PC-3 (cell line): ENCODE measurements at regions of chr12 and their contacts with region 1.

Region 1: GRCh38 chr12:53938326-53939140 is at the start of gene HOXC13:
- DNase-seq: peak; percentile 99
- ATAC-seq: peak; percentile 82
- H3K4me3 ChIP-seq: peak within 1 kb of the TSS; percentile 87
- H3K27ac ChIP-seq: no peak within 1 kb of the TSS
- H3K4me1 ChIP-seq: peaks cover 25% of the 10 kb centered on the region
- H3K27me3 ChIP-seq: no peaks in the 10 kb centered on the region
- CTCF ChIP-seq: no peak
- total RNA-seq, gene HOXC13: 7.8 and 9.0 TPM in 2 replicates

Region 2: DNA sequence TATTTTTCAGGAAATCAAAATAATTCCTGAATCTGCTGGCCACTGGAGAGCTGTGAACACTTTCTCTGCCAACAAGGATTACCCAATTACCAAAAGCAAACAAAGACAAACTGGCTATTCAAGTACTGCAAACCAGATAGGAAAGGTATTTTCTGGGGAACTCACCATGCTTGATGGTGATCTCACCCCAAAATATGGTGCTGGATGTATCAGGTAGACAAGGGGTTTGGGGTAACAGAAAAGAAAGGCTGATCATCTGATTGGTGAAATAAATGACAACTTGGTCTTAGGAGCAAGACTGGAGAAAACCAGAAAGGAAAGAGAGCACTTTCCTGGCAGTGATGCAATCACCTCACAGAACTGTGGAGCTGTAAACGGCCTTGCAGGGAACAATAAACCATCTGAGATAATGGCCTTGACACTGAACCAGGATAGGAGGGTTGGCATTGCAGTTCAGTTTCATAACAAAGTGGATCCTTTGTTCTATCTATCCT is 400.3 kb before region 1 on chr12:
- CTCF ChIA-PET with region 1: no interaction called
- POLR2A ChIA-PET with region 1: no interaction called
- intact Hi-C with region 1: no loop called
- DNase-seq: peak; percentile 72
- ATAC-seq: peak; percentile 51
- H3K4me3 ChIP-seq: no peak overlapping the region
- H3K27ac ChIP-seq: peak overlapping the region; percentile 47
- H3K4me1 ChIP-seq: peaks cover 19% of the 10 kb centered on the region
- H3K27me3 ChIP-seq: no peaks in the 10 kb centered on the region
- CTCF ChIP-seq: no peak

Region 3: GRCh38 chr12:53727310-53728041 is 211.1 kb before region 1 on chr12 and contains the start of gene CALCOCO1:
- CTCF ChIA-PET with region 1: no interaction called
- POLR2A ChIA-PET with region 1: no interaction called
- intact Hi-C with region 1: loop called (anchors 1 kb)
- DNase-seq: peak; percentile 98
- ATAC-seq: peak; percentile 100
- H3K4me3 ChIP-seq: peak within 1 kb of the TSS; percentile 77
- H3K27ac ChIP-seq: no peak within 1 kb of the TSS
- H3K4me1 ChIP-seq: peaks cover 16% of the 10 kb centered on the region
- H3K27me3 ChIP-seq: no peaks in the 10 kb centered on the region
- CTCF ChIP-seq: no peak
- total RNA-seq, gene CALCOCO1: 20.4 and 30.6 TPM in 2 replicates

Region 4: DNA sequence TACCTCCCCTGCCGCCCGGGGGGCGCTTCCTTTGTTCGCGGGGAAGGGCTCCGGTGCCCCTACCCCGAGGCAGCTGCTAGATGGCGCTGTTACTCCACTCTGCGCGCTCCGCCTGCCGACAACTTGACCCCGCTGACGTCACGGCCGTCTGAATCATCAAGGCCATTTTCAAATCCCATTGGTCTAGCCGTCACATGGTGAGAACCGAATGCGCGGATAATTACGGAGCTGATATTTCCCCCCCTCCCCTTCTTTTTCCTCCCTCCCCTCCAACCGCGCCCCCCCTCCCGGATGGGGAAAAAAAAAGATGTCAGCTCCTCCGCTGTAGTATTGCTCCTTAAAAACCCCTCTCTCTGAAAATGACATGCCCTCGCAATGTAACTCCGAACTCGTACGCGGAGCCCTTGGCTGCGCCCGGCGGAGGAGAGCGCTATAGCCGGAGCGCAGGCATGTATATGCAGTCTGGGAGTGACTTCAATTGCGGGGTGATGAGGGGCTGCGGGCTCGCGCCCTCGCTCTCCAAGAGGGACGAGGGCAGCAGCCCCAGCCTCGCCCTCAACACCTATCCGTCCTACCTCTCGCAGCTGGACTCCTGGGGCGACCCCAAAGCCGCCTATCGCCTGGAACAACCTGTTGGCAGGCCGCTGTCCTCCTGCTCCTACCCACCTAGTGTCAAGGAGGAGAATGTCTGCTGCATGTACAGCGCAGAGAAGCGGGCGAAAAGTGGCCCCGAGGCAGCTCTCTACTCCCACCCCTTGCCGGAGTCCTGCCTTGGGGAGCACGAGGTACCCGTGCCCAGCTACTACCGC is 46.6 kb after region 1 on chr12 and contains the start of gene HOXC10:
- CTCF ChIA-PET with region 1: interaction called, 4 read pairs
- POLR2A ChIA-PET with region 1: no interaction called
- intact Hi-C with region 1: loop called (anchors 5 kb)
- DNase-seq: peak; percentile 93
- ATAC-seq: peak; percentile 64
- H3K4me3 ChIP-seq: peak within 1 kb of the TSS; percentile 46; the same call in 1 of the 2 replicates
- H3K27ac ChIP-seq: no peak within 1 kb of the TSS
- H3K4me1 ChIP-seq: peaks cover 26% of the 10 kb centered on the region
- H3K27me3 ChIP-seq: no peaks in the 10 kb centered on the region
- CTCF ChIP-seq: peak; percentile 71
- total RNA-seq, gene HOXC10: 0.69 and 2.9 TPM in 2 replicates

Region 5: DNA sequence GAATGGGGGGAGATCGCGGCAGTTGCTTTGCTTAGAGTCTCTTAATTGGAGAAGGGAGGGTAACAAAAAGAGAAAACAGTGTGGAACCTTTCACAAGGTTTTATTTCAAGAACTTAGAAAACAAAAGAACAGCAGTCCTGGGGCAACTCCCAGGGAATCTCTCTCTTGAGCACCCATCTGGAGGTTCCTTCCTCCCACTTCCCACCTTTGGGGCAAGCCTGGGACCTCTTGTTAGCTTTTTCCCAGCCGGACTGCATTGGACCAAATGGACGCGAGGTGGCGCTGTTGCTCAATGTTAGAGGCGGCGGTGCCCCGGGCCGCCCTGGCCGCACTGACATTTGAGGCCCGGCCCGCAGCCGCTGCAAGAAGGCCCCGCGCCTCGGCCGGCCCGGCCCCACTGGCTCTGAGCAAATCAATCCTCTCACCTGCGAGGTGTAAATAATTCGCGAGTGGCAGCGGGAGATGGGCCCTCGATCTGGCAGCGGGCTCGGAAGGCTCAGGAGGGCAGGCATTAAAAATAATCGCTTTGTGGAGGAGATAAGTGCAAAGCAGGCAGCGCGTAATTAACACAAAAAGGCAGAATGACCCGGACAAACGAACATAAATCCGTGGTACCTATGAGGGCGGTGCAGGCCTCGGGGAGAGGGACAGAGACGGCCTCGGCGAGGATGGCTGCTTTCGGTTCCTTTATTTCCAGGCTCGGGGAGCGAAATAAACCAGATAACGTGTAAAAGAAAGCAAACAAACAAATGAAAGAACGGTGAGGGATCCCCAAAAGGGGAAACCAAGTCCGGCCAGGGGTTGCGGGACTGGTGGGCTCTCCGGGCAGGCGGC is 67.5 kb after region 1 on chr12:
- CTCF ChIA-PET with region 1: no interaction called
- POLR2A ChIA-PET with region 1: no interaction called
- intact Hi-C with region 1: no loop called
- DNase-seq: peak; percentile 91
- ATAC-seq: peak; percentile 68
- H3K4me3 ChIP-seq: peak overlapping the region; percentile 47; the same call in 1 of the 2 replicates
- H3K27ac ChIP-seq: no peak overlapping the region
- H3K4me1 ChIP-seq: peaks cover 26% of the 10 kb centered on the region
- H3K27me3 ChIP-seq: no peaks in the 10 kb centered on the region
- CTCF ChIP-seq: peak; percentile 95